CD4-positive, alpha-beta T cell (primary cell): ENCODE measurements at regions of chr12 and their contacts with region 1.

Region 1: GRCh38 chr12:132153501-132154340 is 9.5 kb downstream of the NOC4L start:
- DNase-seq: peak; percentile 54 to 90 (median 68)
- ATAC-seq: peak; percentile 95
- H3K4me3 ChIP-seq: peak overlapping the region; percentile 32
- H3K4me3 Mint-ChIP-seq: peak overlapping the region; percentile 38
- H3K27ac ChIP-seq: no peak overlapping the region
- H3K27ac Mint-ChIP-seq: no peak overlapping the region
- H3K4me1 ChIP-seq: peaks cover 9% of the 10 kb centered on the region
- H3K4me1 Mint-ChIP-seq: no peaks in the 10 kb centered on the region
- H3K27me3 ChIP-seq: no peaks in the 10 kb centered on the region
- H3K27me3 Mint-ChIP-seq: no peaks in the 10 kb centered on the region
- CTCF ChIP-seq: peak; percentile 79

Region 2: DNA sequence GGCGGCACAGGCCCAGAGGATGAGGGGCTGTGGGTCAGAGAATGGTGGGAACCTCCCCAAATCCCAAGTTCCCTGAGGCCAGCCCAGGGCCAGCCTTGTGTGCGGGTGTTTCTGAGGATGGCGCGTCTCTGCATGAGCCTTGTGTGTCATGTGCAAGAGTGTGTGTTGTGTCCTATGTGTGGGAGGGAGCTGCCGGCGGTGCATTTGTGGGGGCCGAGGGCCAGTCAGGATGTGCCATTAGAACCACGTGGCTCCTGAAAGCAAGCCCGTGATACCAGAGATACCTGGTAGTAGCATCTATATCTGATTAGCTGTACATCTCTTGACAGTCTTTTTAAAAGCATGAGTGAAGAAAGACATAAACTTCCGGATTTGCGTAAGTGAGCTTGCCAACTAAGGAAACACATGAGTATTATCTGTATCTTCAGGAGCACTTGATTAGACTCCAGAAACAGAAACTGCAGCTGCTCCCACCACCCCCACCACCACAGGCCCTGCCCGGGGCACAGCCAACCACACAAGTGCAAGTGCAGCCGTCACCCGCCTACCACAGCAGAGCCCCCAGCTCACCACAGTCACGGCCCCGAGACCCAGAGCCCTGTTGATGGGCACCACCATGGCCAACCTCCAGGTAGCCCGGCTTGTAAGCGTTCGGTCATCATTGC is 28.8 kb before region 1 on chr12:
- CTCF ChIA-PET with region 1: no interaction called
- POLR2A ChIA-PET with region 1: no interaction called
- intact Hi-C with region 1: no loop called
- DNase-seq: no peak
- ATAC-seq: no peak
- H3K4me3 ChIP-seq: no peak overlapping the region
- H3K4me3 Mint-ChIP-seq: no peak overlapping the region
- H3K27ac ChIP-seq: no peak overlapping the region
- H3K27ac Mint-ChIP-seq: no peak overlapping the region
- H3K4me1 ChIP-seq: no peaks in the 10 kb centered on the region
- H3K4me1 Mint-ChIP-seq: no peaks in the 10 kb centered on the region
- H3K27me3 ChIP-seq: no peaks in the 10 kb centered on the region
- H3K27me3 Mint-ChIP-seq: no peaks in the 10 kb centered on the region
- CTCF ChIP-seq: no peak

Region 3: DNA sequence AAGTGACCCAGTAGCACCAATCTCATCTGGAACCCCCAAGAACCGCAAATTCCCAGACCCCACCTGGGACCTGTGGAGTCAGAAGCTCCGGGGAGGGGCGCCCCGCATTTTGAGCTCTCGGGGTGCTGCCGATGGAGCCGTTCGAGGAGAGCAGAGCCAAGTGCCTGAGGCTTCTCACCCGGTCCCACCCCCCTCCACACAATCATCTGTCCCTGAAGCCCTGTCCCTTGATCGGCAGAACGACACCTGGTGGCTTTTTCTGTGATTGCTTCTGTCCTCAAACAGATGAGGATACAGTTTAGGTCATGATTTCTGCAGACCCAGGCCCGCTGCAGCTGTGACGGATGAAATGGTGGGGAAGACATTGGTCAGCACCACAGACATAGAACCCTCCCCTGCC is 65.2 kb after region 1 on chr12:
- CTCF ChIA-PET with region 1: interaction called, 21 read pairs
- POLR2A ChIA-PET with region 1: interaction called, 9 read pairs
- intact Hi-C with region 1: loop called (anchors 1 to 2 kb)
- DNase-seq: peak; percentile 31 to 78 (median 47)
- ATAC-seq: peak; percentile 74
- H3K4me3 ChIP-seq: no peak overlapping the region
- H3K4me3 Mint-ChIP-seq: no peak overlapping the region
- H3K27ac ChIP-seq: no peak overlapping the region
- H3K27ac Mint-ChIP-seq: no peak overlapping the region
- H3K4me1 ChIP-seq: peaks cover 19% of the 10 kb centered on the region
- H3K4me1 Mint-ChIP-seq: peaks cover 10% of the 10 kb centered on the region
- H3K27me3 ChIP-seq: no peaks in the 10 kb centered on the region
- H3K27me3 Mint-ChIP-seq: peaks cover 9% of the 10 kb centered on the region
- CTCF ChIP-seq: peak; percentile 64

Region 4: GRCh38 chr12:132284071-132284826 is 130.5 kb after region 1 on chr12:
- CTCF ChIA-PET with region 1: no interaction called
- POLR2A ChIA-PET with region 1: no interaction called
- intact Hi-C with region 1: loop called in 1 of 2 experiments (anchors 5 kb)
- DNase-seq: peak in 2 of 14 experiments; percentile 8 to 22
- ATAC-seq: peak; percentile 17
- H3K4me3 ChIP-seq: no peak overlapping the region
- H3K4me3 Mint-ChIP-seq: no peak overlapping the region
- H3K27ac ChIP-seq: no peak overlapping the region
- H3K27ac Mint-ChIP-seq: no peak overlapping the region
- H3K4me1 ChIP-seq: peaks cover 37% of the 10 kb centered on the region
- H3K4me1 Mint-ChIP-seq: no peaks in the 10 kb centered on the region
- H3K27me3 ChIP-seq: peaks cover 19 to 20% of the 10 kb centered on the region in 2 experiments
- H3K27me3 Mint-ChIP-seq: peaks cover 42% of the 10 kb centered on the region
- CTCF ChIP-seq: no peak

Region 5: GRCh38 chr12:132367071-132367851 is 213.5 kb after region 1 on chr12:
- CTCF ChIA-PET with region 1: no interaction called
- POLR2A ChIA-PET with region 1: no interaction called
- intact Hi-C with region 1: no loop called
- DNase-seq: no peak
- ATAC-seq: no peak
- H3K4me3 ChIP-seq: no peak overlapping the region
- H3K4me3 Mint-ChIP-seq: no peak overlapping the region
- H3K27ac ChIP-seq: no peak overlapping the region
- H3K27ac Mint-ChIP-seq: no peak overlapping the region
- H3K4me1 ChIP-seq: no peaks in the 10 kb centered on the region
- H3K4me1 Mint-ChIP-seq: no peaks in the 10 kb centered on the region
- H3K27me3 ChIP-seq: peaks cover 6 to 24% of the 10 kb centered on the region in 2 experiments
- H3K27me3 Mint-ChIP-seq: peaks cover 28% of the 10 kb centered on the region
- CTCF ChIP-seq: no peak

Region 6: GRCh38 chr12:132414634-132415326 is 261.1 kb after region 1 on chr12:
- CTCF ChIA-PET with region 1: interaction called, 3 read pairs
- POLR2A ChIA-PET with region 1: no interaction called
- intact Hi-C with region 1: loop called in 1 of 2 experiments (anchors 2 kb)
- DNase-seq: peak; percentile 50 to 88 (median 70)
- ATAC-seq: peak; percentile 93
- H3K4me3 ChIP-seq: no peak overlapping the region
- H3K4me3 Mint-ChIP-seq: no peak overlapping the region
- H3K27ac ChIP-seq: no peak overlapping the region
- H3K27ac Mint-ChIP-seq: no peak overlapping the region
- H3K4me1 ChIP-seq: peaks cover 19% of the 10 kb centered on the region
- H3K4me1 Mint-ChIP-seq: peaks cover 4% of the 10 kb centered on the region
- H3K27me3 ChIP-seq: peaks cover 0 to 3% of the 10 kb centered on the region in 2 experiments
- H3K27me3 Mint-ChIP-seq: no peaks in the 10 kb centered on the region
- CTCF ChIP-seq: peak; percentile 87

Region 7: DNA sequence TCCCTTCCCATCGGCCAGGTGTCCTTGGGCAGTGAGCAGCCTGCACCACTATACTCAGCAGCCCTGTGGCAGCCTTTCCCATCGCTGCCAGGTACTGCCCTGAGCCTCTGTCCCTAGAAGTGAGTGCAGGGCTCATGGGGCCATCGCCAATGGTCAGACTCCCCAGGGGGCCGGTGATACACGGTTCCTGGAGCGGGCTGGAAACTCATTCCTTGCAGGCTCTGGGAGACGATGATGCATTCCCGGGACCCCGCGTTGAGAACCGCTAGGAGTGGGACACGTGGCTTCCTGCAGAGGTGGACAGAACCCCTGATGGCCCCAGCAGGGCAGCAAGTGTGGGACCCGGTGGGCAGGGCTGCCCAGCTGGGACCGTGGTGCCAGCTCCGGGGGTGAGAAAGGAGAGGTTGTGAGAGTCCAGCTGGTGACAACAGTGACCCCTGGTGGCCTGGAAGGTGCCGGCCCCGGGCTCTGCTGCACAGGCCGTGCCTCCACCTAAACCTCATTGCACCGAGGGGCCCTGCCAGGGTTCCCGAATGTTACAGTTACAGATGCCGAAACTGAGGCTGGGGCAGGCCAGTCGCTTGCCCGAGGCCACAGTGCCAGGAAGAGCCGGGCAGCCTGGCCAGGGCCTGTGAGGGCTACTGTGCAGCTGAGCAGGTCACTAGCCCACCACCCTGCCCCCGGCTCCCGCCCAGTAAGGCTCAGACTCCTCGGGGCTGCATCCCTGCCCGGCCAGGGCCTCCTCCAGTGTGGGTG is 370.0 kb after region 1 on chr12:
- CTCF ChIA-PET with region 1: no interaction called
- POLR2A ChIA-PET with region 1: no interaction called
- intact Hi-C with region 1: loop called (anchors 1 to 5 kb)
- DNase-seq: peak; percentile 61 to 84 (median 71)
- ATAC-seq: peak; percentile 69
- H3K4me3 ChIP-seq: no peak overlapping the region
- H3K4me3 Mint-ChIP-seq: no peak overlapping the region
- H3K27ac ChIP-seq: no peak overlapping the region
- H3K27ac Mint-ChIP-seq: no peak overlapping the region
- H3K4me1 ChIP-seq: peaks cover 21% of the 10 kb centered on the region
- H3K4me1 Mint-ChIP-seq: peaks cover 11% of the 10 kb centered on the region
- H3K27me3 ChIP-seq: no peaks in the 10 kb centered on the region
- H3K27me3 Mint-ChIP-seq: no peaks in the 10 kb centered on the region
- CTCF ChIP-seq: peak; percentile 79

Region 8: GRCh38 chr12:132614861-132615578 is 461.3 kb after region 1 on chr12:
- CTCF ChIA-PET with region 1: interaction called, 4 read pairs
- POLR2A ChIA-PET with region 1: no interaction called
- intact Hi-C with region 1: loop called (anchors 1 to 2 kb)
- DNase-seq: peak; percentile 66 to 90 (median 74)
- ATAC-seq: peak; percentile 86
- H3K4me3 ChIP-seq: no peak overlapping the region
- H3K4me3 Mint-ChIP-seq: no peak overlapping the region
- H3K27ac ChIP-seq: no peak overlapping the region
- H3K27ac Mint-ChIP-seq: no peak overlapping the region
- H3K4me1 ChIP-seq: peaks cover 17% of the 10 kb centered on the region
- H3K4me1 Mint-ChIP-seq: peaks cover 17% of the 10 kb centered on the region
- H3K27me3 ChIP-seq: peaks cover 38 to 43% of the 10 kb centered on the region in 2 experiments
- H3K27me3 Mint-ChIP-seq: peaks cover 48% of the 10 kb centered on the region
- CTCF ChIP-seq: peak; percentile 94